Left lung (tissue), 14 donors: ENCODE measurements at regions of chr20 and their contacts with region 1.

Region 1: DNA sequence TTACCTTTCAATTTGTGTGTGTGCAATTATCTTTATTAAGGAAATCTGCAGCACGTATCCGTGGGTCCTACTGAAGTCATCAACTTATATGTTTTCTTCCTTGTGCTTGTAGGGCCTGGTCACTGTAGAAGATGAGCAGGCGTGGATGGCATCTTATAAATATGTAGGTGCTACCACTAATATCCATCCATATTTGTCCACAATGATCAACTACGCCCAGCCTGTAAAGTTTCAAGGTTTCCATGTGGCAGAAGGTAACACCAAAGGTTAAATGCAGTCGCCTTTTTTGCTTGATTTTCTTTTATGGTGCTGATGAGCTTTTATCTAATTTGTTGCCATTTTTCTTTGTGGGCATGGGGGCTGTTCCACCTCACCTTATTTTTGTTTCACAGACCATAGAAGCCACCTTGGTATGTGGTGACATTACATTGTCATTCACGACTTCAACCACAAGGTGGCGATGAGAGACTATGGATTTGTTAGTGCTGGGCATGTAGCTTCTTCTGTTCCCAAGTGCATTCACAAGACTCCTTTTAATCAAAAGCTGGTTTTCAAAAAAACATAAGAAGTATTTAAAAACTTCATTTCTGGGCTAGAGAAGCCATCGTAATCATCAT is 106.5 kb upstream of the LAMP5 start:
- DNase-seq: peak in 3 of 4 donors; percentile 38 to 75 (median 59)
- ATAC-seq: peak; percentile 97
- H3K4me3 ChIP-seq: no peak overlapping the region
- H3K27ac ChIP-seq: no peak overlapping the region
- H3K4me1 ChIP-seq: peaks cover 3 to 4% of the 10 kb centered on the region in 2 donors
- H3K27me3 ChIP-seq: no peaks in the 10 kb centered on the region
- CTCF ChIP-seq: peak; percentile 78

Region 2: GRCh38 chr20:9609887-9610502 is 202.1 kb after region 1 on chr20:
- intact Hi-C with region 1: loop called in 1 of 2 experiments (anchors 5 kb)
- DNase-seq: peak in 2 of 4 donors; percentile 60 to 73
- ATAC-seq: peak; percentile 79
- H3K4me3 ChIP-seq: no peak overlapping the region
- H3K27ac ChIP-seq: no peak overlapping the region
- H3K4me1 ChIP-seq: no peaks in the 10 kb centered on the region
- H3K27me3 ChIP-seq: no peaks in the 10 kb centered on the region
- CTCF ChIP-seq: peak; percentile 65 to 71

Region 3: DNA sequence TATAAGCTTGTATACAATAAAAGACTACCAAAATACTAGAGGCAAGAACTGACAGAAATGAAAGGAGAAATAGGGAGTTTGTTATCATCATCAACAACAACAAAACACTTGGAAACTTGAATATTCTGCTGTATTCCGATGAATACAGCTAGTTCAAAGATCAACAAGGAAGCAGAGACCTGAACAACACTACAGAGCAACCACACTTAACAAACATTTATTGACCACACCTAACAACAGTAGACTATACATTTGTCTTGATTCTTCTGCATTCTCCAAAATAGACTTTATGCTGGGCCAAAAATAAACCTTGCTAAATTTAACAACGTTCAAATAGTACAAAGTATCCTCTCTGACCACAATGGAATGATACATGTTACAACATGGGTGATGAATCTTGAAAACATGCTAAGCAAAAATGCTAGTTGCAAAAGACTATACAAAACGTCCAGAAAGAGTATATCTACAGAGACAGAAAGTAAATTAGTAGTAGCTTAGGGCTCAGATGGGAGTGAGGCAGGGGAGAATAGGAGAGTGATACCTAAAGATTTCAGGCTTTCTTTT is 470.1 kb after region 1 on chr20:
- intact Hi-C with region 1: no loop called
- DNase-seq: no peak
- ATAC-seq: no peak
- H3K4me3 ChIP-seq: no peak overlapping the region
- H3K27ac ChIP-seq: no peak overlapping the region
- H3K4me1 ChIP-seq: no peaks in the 10 kb centered on the region
- H3K27me3 ChIP-seq: no peaks in the 10 kb centered on the region
- CTCF ChIP-seq: no peak